ENCODE measurements at regions of chr15 and their contacts with region 1.

Region 1: GRCh38 chr15:78778422-78778821 is 32.8 kb downstream of the ADAMTS7 start:
- DNase-seq: no peak
- ATAC-seq: no peak

Region 2: GRCh38 chr15:77974098-77974414 is 804.4 kb before region 1 on chr15:
- intact Hi-C with region 1: loop called in 1 of 2 experiments (anchors 10 kb)
- DNase-seq: peak; percentile 57 to 61
- ATAC-seq: peak; percentile 75

Region 3: GRCh38 chr15:78396976-78397375 is 381.4 kb before region 1 on chr15:
- intact Hi-C with region 1: no loop called
- DNase-seq: peak; percentile 81 to 82
- ATAC-seq: peak; percentile 85

Measured in left colon (tissue), 2 donors.